ENCODE measurements at regions of chr6 and their contacts with region 1.

Region 1: DNA sequence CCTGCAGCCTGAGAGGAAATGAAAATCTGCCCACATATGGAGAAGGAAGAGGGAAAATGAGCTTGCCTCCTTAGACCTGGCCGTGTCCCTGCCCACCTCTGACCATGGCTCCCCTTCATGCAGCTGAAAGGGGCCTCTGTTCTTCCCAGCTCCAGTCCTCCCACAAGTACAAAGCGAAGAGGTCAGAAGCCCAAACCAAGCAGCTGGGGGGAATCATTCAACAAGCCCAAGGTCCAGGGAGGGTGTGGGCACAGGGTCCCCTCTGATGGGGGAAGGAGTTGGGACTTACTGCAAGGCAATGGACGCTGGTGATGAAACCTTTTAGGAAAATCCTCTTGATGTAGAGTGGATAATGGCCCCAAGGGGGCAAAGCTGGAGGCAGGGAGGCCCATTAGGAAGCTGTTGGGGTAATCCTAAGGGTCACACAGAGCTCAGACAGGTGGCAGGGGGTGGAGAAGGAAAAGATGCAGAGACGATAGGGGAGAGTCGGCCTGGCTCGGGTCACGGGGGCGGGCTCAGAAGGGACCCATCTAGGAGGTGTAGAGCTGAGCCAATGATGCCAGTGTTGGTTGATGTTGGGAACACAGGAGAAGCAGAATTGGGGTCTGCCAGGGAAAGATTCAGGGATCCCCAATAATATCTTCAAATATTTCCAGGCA is 16.1 kb upstream of the GRM4 start:
- DNase-seq: no peak
- ATAC-seq: no peak
- H3K4me3 ChIP-seq: no peak overlapping the region
- H3K4me3 Mint-ChIP-seq: no peak overlapping the region
- H3K27ac ChIP-seq: no peak overlapping the region
- H3K27ac Mint-ChIP-seq: peak overlapping the region in 1 of 9 donors; percentile 44
- H3K4me1 ChIP-seq: no peaks in the 10 kb centered on the region
- H3K4me1 Mint-ChIP-seq: peaks cover 0 to 8% (median 0%) of the 10 kb centered on the region in 7 donors
- H3K27me3 ChIP-seq: no peaks in the 10 kb centered on the region
- H3K27me3 Mint-ChIP-seq: peaks cover 0 to 32% (median 0%) of the 10 kb centered on the region in 5 donors

Region 2: GRCh38 chr6:34182751-34183531 is 21.0 kb after region 1 on chr6:
- CTCF ChIA-PET with region 1: interaction called, 9 read pairs
- POLR2A ChIA-PET with region 1: no interaction called
- intact Hi-C with region 1: loop called in 1 of 2 experiments (anchors 2 kb)
- DNase-seq: peak in 8 of 9 donors; percentile 52 to 81 (median 72)
- ATAC-seq: peak; percentile 95
- H3K4me3 ChIP-seq: peak overlapping the region; percentile 47
- H3K4me3 Mint-ChIP-seq: peak overlapping the region; percentile 43 to 80 (median 67)
- H3K27ac ChIP-seq: peak overlapping the region; percentile 45
- H3K27ac Mint-ChIP-seq: peak overlapping the region; percentile 55 to 90 (median 85)
- H3K4me1 ChIP-seq: peaks cover 23 to 28% of the 10 kb centered on the region in 2 donors
- H3K4me1 Mint-ChIP-seq: peaks cover 17 to 47% (median 34%) of the 10 kb centered on the region in 7 donors
- H3K27me3 ChIP-seq: no peaks in the 10 kb centered on the region
- H3K27me3 Mint-ChIP-seq: peaks cover 0 to 3% (median 0%) of the 10 kb centered on the region in 5 donors

Region 3: DNA sequence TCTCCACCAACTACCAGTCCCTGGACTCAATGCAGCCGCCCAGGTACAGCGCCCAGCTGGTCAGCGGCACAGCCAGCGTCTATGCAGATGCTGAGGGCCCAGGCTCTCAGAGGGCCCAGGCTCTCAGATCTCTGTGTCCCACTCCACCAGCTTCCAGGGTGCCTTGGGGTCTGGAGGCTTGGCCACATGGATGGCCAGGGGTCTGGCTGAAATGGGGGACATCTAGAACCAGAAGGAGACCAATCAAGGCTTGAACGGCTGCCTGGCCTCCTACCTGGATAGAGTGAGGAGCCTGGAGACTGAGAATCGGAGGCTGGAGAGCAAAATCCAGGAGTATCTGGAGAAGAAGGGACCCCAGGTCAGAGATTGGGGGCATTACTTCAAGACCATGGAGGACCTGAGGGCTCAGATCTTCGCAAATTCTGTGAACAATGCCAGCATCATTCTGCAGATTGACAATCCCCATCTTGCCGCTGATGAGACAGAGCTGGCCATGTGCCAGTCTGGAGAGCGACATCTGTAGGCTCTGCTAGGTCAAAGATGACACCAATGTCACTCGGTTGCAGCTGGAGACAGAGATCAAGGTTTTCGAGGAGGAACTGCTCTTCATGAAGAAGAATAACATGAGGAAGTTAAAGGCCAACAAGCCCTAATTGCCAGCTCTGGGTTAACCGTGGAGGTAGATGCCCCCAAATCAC is 28.0 kb after region 1 on chr6:
- CTCF ChIA-PET with region 1: interaction called, 22 read pairs
- POLR2A ChIA-PET with region 1: no interaction called
- intact Hi-C with region 1: loop called (anchors 1 to 5 kb)
- DNase-seq: peak in 8 of 9 donors; percentile 29 to 78 (median 61)
- ATAC-seq: peak; percentile 80
- H3K4me3 ChIP-seq: no peak overlapping the region
- H3K4me3 Mint-ChIP-seq: no peak overlapping the region
- H3K27ac ChIP-seq: no peak overlapping the region
- H3K27ac Mint-ChIP-seq: peak overlapping the region in 8 of 9 donors; percentile 37 to 72 (median 54)
- H3K4me1 ChIP-seq: peaks cover 0 to 12% of the 10 kb centered on the region in 2 donors
- H3K4me1 Mint-ChIP-seq: peaks cover 6 to 19% (median 10%) of the 10 kb centered on the region in 7 donors
- H3K27me3 ChIP-seq: no peaks in the 10 kb centered on the region
- H3K27me3 Mint-ChIP-seq: no peaks in the 10 kb centered on the region

Region 4: GRCh38 chr6:34414999-34415858 is 253.2 kb after region 1 on chr6:
- CTCF ChIA-PET with region 1: interaction called, 26 read pairs
- POLR2A ChIA-PET with region 1: no interaction called
- intact Hi-C with region 1: loop called (anchors 1 kb)
- DNase-seq: peak in 7 of 9 donors; percentile 38 to 63 (median 56)
- ATAC-seq: peak; percentile 88
- H3K4me3 ChIP-seq: no peak overlapping the region
- H3K4me3 Mint-ChIP-seq: no peak overlapping the region
- H3K27ac ChIP-seq: no peak overlapping the region
- H3K27ac Mint-ChIP-seq: peak overlapping the region in 4 of 9 donors; percentile 17 to 56 (median 45)
- H3K4me1 ChIP-seq: no peaks in the 10 kb centered on the region
- H3K4me1 Mint-ChIP-seq: peaks cover 0 to 17% (median 9%) of the 10 kb centered on the region in 7 donors
- H3K27me3 ChIP-seq: no peaks in the 10 kb centered on the region
- H3K27me3 Mint-ChIP-seq: no peaks in the 10 kb centered on the region

Measured in naive thymus-derived CD4-positive, alpha-beta T cell (primary cell).